PC-9 (cell line): ENCODE measurements at regions of chr7 and their contacts with region 1.

Region 1: GRCh38 chr7:120725376-120726039 is 132.4 kb downstream of the TSPAN12 start:
- DNase-seq: no peak
- H3K4me3 ChIP-seq: no peak overlapping the region
- H3K27ac ChIP-seq: no peak overlapping the region
- H3K4me1 ChIP-seq: no peaks in the 10 kb centered on the region
- H3K27me3 ChIP-seq: no peaks in the 10 kb centered on the region
- CTCF ChIP-seq: peak; percentile 80

Region 2: DNA sequence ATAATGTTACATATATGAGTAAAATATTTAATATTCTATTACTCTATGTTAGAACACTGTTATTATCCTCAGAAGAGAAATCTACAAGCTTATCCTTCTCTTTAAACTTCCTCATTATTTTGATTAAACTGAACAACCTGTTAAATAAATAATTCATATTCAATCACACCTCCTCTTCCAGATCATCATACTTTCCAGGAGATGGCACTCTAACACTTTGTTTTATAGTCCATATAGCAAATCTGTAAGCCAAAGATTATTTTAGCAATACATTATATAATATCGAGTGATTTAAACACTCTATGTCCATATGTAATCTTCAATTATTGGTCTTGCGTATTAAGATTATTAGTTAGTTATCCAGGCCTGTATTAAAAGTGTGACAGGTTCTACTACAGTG is 1807.0 kb before region 1 on chr7:
- CTCF ChIA-PET with region 1: no interaction called
- POLR2A ChIA-PET with region 1: no interaction called
- intact Hi-C with region 1: loop called (anchors 5 kb)
- DNase-seq: peak in 1 of 2 experiments; percentile 42
- H3K4me3 ChIP-seq: no peak overlapping the region
- H3K27ac ChIP-seq: no peak overlapping the region
- H3K4me1 ChIP-seq: no peaks in the 10 kb centered on the region
- H3K27me3 ChIP-seq: no peaks in the 10 kb centered on the region
- CTCF ChIP-seq: peak; percentile 72

Region 3: GRCh38 chr7:119270045-119270464 is 1455.5 kb before region 1 on chr7:
- CTCF ChIA-PET with region 1: interaction called, 8 read pairs
- POLR2A ChIA-PET with region 1: no interaction called
- intact Hi-C with region 1: loop called (anchors 2 kb)
- DNase-seq: peak; percentile 49 to 58
- H3K4me3 ChIP-seq: no peak overlapping the region
- H3K27ac ChIP-seq: no peak overlapping the region
- H3K4me1 ChIP-seq: no peaks in the 10 kb centered on the region
- H3K27me3 ChIP-seq: no peaks in the 10 kb centered on the region
- CTCF ChIP-seq: peak; percentile 91

Region 4: DNA sequence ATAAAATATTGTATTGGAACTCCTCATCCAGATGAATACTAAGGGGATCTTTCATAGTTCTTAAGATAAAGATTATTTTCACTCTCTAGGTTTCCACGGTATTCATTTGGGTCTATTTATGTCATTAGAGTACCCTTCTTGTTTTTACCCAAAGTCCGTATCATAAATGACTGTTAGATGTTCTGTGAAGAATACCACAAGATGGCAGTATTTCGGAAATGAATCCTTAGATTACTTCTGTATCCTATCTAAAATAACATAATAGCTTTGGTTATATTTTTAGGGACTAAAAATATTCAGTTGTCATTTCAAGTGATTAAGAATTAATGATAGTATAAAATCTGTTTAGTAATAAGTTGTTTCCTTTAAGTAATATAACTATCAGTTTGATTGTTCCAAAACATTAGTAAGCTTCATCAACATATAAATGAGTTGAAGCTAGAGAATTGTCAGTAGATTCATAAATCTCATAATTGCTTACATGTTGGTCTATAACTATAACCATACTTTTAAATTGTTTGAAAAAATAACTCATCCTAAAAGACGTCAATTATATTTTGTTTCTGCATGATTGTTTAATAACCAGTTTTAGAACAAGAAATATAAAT is 790.0 kb before region 1 on chr7:
- CTCF ChIA-PET with region 1: no interaction called
- POLR2A ChIA-PET with region 1: no interaction called
- intact Hi-C with region 1: loop called (anchors 10 kb)
- DNase-seq: no peak
- H3K4me3 ChIP-seq: no peak overlapping the region
- H3K27ac ChIP-seq: no peak overlapping the region
- H3K4me1 ChIP-seq: no peaks in the 10 kb centered on the region
- H3K27me3 ChIP-seq: no peaks in the 10 kb centered on the region
- CTCF ChIP-seq: peak; percentile 70

Region 5: GRCh38 chr7:120554960-120555571 is 170.4 kb before region 1 on chr7:
- CTCF ChIA-PET with region 1: no interaction called
- POLR2A ChIA-PET with region 1: no interaction called
- intact Hi-C with region 1: loop called (anchors 10 kb)
- DNase-seq: peak; percentile 42 to 47
- H3K4me3 ChIP-seq: no peak overlapping the region
- H3K27ac ChIP-seq: no peak overlapping the region
- H3K4me1 ChIP-seq: no peaks in the 10 kb centered on the region
- H3K27me3 ChIP-seq: no peaks in the 10 kb centered on the region
- CTCF ChIP-seq: peak; percentile 90

Region 6: DNA sequence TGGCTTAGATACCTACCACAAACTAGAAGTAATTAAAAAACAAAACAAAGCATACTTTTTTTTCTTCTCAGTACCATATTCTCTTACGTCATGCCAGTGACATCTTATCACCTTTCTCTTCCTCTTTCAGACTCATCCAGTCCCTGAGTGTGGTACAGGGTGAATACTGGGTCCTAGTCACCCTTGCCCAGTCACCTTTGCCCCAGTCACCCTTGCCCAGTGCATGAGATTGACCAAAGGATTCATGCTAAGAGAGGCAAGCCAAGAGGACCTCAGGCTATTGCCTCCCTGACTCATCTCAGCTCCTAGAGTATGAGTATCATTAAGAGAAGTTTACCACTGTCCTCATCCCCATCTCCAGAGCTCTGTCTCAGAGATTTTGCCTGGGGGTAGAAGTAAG is 142.4 kb after region 1 on chr7:
- CTCF ChIA-PET with region 1: no interaction called
- POLR2A ChIA-PET with region 1: no interaction called
- intact Hi-C with region 1: no loop called
- DNase-seq: peak in 1 of 2 experiments; percentile 61
- H3K4me3 ChIP-seq: no peak overlapping the region
- H3K27ac ChIP-seq: no peak overlapping the region
- H3K4me1 ChIP-seq: peaks cover 12% of the 10 kb centered on the region; the same call in 1 of the 2 replicates
- H3K27me3 ChIP-seq: no peaks in the 10 kb centered on the region
- CTCF ChIP-seq: no peak